ENCODE measurements at regions of chr4 and their contacts with region 1.

Region 1: GRCh38 chr4:84708406-84709135 is 125.6 kb downstream of the CDS1 start:
- DNase-seq: no peak
- H3K4me3 ChIP-seq: no peak overlapping the region
- H3K27ac ChIP-seq: no peak overlapping the region
- H3K4me1 ChIP-seq: no peaks in the 10 kb centered on the region
- H3K27me3 ChIP-seq: no peaks in the 10 kb centered on the region
- CTCF ChIP-seq: no peak

Region 2: DNA sequence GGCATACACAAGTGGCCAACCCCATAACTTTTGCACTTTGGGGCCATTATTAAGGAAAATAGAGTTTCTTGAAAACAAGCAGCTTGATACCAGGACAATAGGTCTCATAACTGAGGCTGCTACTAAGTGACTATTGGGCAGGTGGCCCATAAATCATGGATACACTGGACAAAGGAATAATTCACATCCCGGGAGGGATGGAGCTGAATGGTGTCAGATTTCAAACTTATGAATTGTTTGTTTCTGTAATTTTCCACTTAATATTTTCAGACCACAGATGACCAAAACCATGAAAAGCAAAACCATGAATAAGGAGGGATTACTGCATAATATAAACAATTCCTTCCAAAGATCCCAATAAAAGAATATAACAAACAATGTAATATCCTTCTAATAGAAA is 143.5 kb after region 1 on chr4:
- CTCF ChIA-PET with region 1: no interaction called
- POLR2A ChIA-PET with region 1: no interaction called
- intact Hi-C with region 1: no loop called
- DNase-seq: no peak
- H3K4me3 ChIP-seq: no peak overlapping the region
- H3K27ac ChIP-seq: no peak overlapping the region
- H3K4me1 ChIP-seq: peaks cover 20% of the 10 kb centered on the region
- H3K27me3 ChIP-seq: no peaks in the 10 kb centered on the region
- CTCF ChIP-seq: no peak

Region 3: GRCh38 chr4:84907145-84907544 is 198.6 kb after region 1 on chr4:
- CTCF ChIA-PET with region 1: no interaction called
- POLR2A ChIA-PET with region 1: interaction called, 13 read pairs
- intact Hi-C with region 1: no loop called
- DNase-seq: no peak
- H3K4me3 ChIP-seq: no peak overlapping the region
- H3K27ac ChIP-seq: no peak overlapping the region
- H3K4me1 ChIP-seq: peaks cover 12% of the 10 kb centered on the region
- H3K27me3 ChIP-seq: no peaks in the 10 kb centered on the region
- CTCF ChIP-seq: no peak